AG04449 (cell line): ENCODE measurements at regions of chr4 and their contacts with region 1.

Region 1: GRCh38 chr4:53479736-53480525 is 102.5 kb downstream of the FIP1L1 start:
- DNase-seq: peak; percentile 65
- H3K4me3 ChIP-seq: no peak overlapping the region
- CTCF ChIP-seq: no peak

Region 2: GRCh38 chr4:53208753-53209152 is 271.2 kb before region 1 on chr4:
- CTCF ChIA-PET with region 1: no interaction called
- POLR2A ChIA-PET with region 1: no interaction called
- DNase-seq: no peak
- H3K4me3 ChIP-seq: no peak overlapping the region
- CTCF ChIP-seq: no peak

Region 3: DNA sequence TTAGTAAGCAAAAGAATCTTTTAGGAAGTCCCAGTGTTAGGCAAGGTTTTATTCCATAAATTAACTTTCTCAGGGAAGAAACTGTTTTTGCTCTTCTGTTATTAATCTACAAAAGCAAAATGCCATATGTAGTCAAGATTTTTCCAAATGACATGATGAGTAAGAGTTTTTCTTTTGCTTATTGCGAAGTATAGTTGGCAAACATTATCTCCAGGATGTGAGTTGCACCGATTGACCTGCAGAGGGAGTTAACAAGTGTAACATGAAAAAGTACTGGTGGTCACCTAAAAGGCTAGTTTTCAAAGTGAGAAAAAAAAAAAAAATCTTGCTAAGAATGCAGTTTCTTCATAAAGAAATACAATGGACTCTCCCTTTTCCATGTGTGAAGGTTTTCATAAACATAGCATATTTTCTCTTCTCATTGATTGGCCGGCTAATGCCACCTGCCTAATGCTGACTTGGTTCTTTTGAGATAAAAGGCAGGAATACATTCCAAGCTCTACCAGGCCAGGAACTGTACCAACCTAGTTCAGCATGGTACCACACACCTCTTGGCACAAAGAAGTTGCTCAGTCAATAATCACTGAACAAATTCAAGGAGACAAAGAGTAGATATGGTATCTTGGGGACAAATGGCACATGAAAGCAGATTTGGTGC is 11.2 kb after region 1 on chr4:
- CTCF ChIA-PET with region 1: interaction called, 28 read pairs
- POLR2A ChIA-PET with region 1: interaction called, 3 read pairs
- DNase-seq: peak; percentile 83
- H3K4me3 ChIP-seq: no peak overlapping the region
- CTCF ChIP-seq: peak; percentile 60